Natural killer cell (primary cell): ENCODE measurements at regions of chr2 and their contacts with region 1.

Region 1: DNA sequence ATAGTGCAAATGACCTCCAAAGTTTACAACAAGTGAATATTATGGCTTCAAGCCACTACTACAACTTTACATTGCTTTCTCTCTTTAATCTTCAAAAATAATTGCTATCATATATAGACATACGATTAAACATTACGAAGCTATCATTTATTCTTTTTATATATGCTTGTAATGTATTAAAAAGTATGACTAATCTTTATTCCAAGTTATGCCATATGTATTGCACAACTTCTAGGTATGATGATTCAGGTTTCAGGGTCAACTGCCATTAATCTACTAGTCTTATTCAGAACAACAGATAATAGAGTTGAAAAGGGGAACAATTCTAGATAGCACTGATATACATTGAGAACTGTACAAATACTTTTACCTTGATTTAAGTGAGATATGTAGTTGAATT is 506.2 kb upstream of the TMEFF2 start:
- DNase-seq: no peak
- ATAC-seq: no peak
- H3K4me3 ChIP-seq: no peak overlapping the region
- H3K4me3 Mint-ChIP-seq: no peak overlapping the region
- H3K27ac ChIP-seq: no peak overlapping the region
- H3K27ac Mint-ChIP-seq: no peak overlapping the region
- H3K4me1 ChIP-seq: no peaks in the 10 kb centered on the region
- H3K4me1 Mint-ChIP-seq: no peaks in the 10 kb centered on the region
- H3K27me3 ChIP-seq: no peaks in the 10 kb centered on the region
- H3K27me3 Mint-ChIP-seq: no peaks in the 10 kb centered on the region
- CTCF ChIP-seq: no peak

Region 2: DNA sequence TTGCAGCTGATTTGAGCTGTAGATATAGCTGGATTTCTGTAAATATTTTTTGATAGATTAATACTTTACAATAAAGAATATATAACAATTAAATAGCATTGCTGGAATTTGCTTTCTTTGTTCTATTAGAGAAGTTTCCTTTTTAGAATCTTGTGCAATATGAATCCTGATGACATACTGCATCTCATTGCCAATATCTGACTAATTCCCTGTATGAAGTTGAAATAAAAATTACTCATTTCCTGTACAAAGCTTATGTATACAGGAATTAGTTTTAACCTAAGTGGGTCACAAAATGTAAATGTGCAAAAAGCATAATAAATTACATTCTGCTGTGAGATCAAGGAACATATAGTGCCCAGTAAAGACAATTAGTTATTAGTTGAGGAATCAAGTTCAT is 433.4 kb before region 1 on chr2:
- intact Hi-C with region 1: no loop called
- DNase-seq: no peak
- ATAC-seq: no peak
- H3K4me3 ChIP-seq: no peak overlapping the region
- H3K4me3 Mint-ChIP-seq: no peak overlapping the region
- H3K27ac ChIP-seq: no peak overlapping the region
- H3K27ac Mint-ChIP-seq: no peak overlapping the region
- H3K4me1 ChIP-seq: no peaks in the 10 kb centered on the region
- H3K4me1 Mint-ChIP-seq: no peaks in the 10 kb centered on the region
- H3K27me3 ChIP-seq: no peaks in the 10 kb centered on the region
- H3K27me3 Mint-ChIP-seq: no peaks in the 10 kb centered on the region
- CTCF ChIP-seq: no peak

Region 3: GRCh38 chr2:192571636-192572035 is 129.3 kb before region 1 on chr2:
- intact Hi-C with region 1: no loop called
- DNase-seq: no peak
- ATAC-seq: no peak
- H3K4me3 ChIP-seq: no peak overlapping the region
- H3K4me3 Mint-ChIP-seq: no peak overlapping the region
- H3K27ac ChIP-seq: no peak overlapping the region
- H3K27ac Mint-ChIP-seq: no peak overlapping the region
- H3K4me1 ChIP-seq: no peaks in the 10 kb centered on the region
- H3K4me1 Mint-ChIP-seq: no peaks in the 10 kb centered on the region
- H3K27me3 ChIP-seq: no peaks in the 10 kb centered on the region
- H3K27me3 Mint-ChIP-seq: no peaks in the 10 kb centered on the region
- CTCF ChIP-seq: no peak

Region 4: DNA sequence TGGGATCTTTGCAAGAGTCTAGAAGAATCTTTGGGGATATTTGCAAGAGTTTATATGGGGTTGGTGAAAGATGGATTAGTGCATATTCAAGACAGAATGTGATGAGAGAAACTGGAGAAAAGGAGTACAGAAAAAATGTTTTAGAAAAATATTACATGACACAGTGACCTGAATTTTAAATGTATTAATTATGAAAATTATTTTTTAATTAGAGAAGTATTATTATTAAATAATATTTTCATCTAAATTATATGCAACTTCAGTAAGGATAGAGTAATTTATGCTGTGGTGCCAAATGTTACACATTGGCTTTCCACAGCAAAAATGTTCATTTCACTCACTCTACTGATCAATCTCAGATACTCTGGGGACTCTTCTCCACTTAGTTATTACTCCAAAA is 1513.3 kb after region 1 on chr2:
- intact Hi-C with region 1: loop called (anchors 10 kb)
- DNase-seq: no peak
- ATAC-seq: no peak
- H3K4me3 ChIP-seq: no peak overlapping the region
- H3K4me3 Mint-ChIP-seq: no peak overlapping the region
- H3K27ac ChIP-seq: no peak overlapping the region
- H3K27ac Mint-ChIP-seq: no peak overlapping the region
- H3K4me1 ChIP-seq: no peaks in the 10 kb centered on the region
- H3K4me1 Mint-ChIP-seq: no peaks in the 10 kb centered on the region
- H3K27me3 ChIP-seq: no peaks in the 10 kb centered on the region
- H3K27me3 Mint-ChIP-seq: no peaks in the 10 kb centered on the region
- CTCF ChIP-seq: no peak